ENCODE measurements at regions of chr1 and their contacts with region 1.

Region 1: GRCh38 chr1:169694304-169695075 is 16.9 kb downstream of the SELL start:
- DNase-seq: peak in 7 of 9 donors; percentile 63 to 85 (median 76)
- ATAC-seq: peak; percentile 71
- H3K4me3 ChIP-seq: peak overlapping the region; percentile 18
- H3K4me3 Mint-ChIP-seq: peak overlapping the region in 9 of 10 donors; percentile 21 to 86 (median 71)
- H3K27ac ChIP-seq: peak overlapping the region; percentile 70
- H3K27ac Mint-ChIP-seq: peak overlapping the region in 4 of 9 donors; percentile 86 to 98 (median 94)
- H3K4me1 ChIP-seq: peaks cover 91 to 92% of the 10 kb centered on the region in 2 donors
- H3K4me1 Mint-ChIP-seq: peaks cover 0 to 89% (median 74%) of the 10 kb centered on the region in 7 donors
- H3K27me3 ChIP-seq: no peaks in the 10 kb centered on the region
- H3K27me3 Mint-ChIP-seq: no peaks in the 10 kb centered on the region

Region 2: DNA sequence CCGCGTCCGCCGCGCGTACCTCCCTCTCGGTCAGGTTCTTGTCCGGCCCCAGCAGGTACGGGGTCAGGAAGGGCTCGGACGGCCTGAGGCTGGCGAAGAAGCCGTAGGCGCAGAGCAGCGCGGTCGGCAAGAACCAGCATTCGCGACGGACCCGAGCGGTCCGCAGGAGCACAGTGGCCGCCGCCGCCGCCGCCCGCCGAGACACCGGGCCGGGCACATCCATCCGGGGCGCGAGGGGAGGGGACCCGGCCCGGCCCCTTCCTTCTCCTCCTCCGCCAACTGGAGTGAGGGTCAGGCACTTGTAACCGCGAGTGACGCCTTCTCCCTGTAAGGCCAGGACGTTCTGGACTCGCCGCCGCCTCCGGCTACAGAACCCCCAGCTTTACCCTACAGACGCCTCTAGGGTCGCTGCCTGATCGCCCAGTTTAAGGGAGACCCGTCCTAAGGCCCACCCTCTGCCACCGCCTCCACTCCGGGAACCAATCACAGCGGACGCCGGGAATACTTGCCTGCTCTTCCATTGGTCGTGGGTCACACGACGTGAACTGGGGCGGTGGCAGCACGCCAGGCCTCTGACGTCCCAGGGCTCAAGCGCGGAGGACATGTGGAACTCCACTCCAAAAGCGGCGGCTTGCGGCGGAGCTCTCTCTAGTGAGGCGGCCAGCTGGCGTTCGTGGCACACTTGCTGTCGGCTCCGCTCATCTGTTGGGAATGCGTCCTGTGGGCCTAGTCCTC is 208.8 kb before region 1 on chr1 and contains the start of gene SLC19A2:
- CTCF ChIA-PET with region 1: interaction called, 3 read pairs
- POLR2A ChIA-PET with region 1: no interaction called
- intact Hi-C with region 1: loop called in 1 of 2 experiments (anchors 5 kb)
- DNase-seq: peak; percentile 79 to 94 (median 89)
- ATAC-seq: peak; percentile 99
- H3K4me3 ChIP-seq: peak within 1 kb of the TSS; percentile 66
- H3K4me3 Mint-ChIP-seq: peak within 1 kb of the TSS; percentile 87 to 98 (median 94)
- H3K27ac ChIP-seq: peak within 1 kb of the TSS; percentile 81
- H3K27ac Mint-ChIP-seq: peak within 1 kb of the TSS; percentile 86 to 98 (median 94)
- H3K4me1 ChIP-seq: peaks cover 4 to 12% of the 10 kb centered on the region in 2 donors
- H3K4me1 Mint-ChIP-seq: peaks cover 35 to 56% (median 46%) of the 10 kb centered on the region in 7 donors
- H3K27me3 ChIP-seq: no peaks in the 10 kb centered on the region
- H3K27me3 Mint-ChIP-seq: peaks cover 0 to 8% (median 0%) of the 10 kb centered on the region in 5 donors
- total RNA-seq, gene SLC19A2: 3.7 to 5.9 (median 4.8) TPM

Region 3: GRCh38 chr1:169610858-169611257 is 83.6 kb before region 1 on chr1:
- CTCF ChIA-PET with region 1: interaction called, 229 read pairs
- POLR2A ChIA-PET with region 1: interaction called, 159 read pairs
- intact Hi-C with region 1: no loop called
- DNase-seq: no peak
- ATAC-seq: no peak
- H3K4me3 ChIP-seq: no peak overlapping the region
- H3K4me3 Mint-ChIP-seq: no peak overlapping the region
- H3K27ac ChIP-seq: no peak overlapping the region
- H3K27ac Mint-ChIP-seq: peak overlapping the region in 1 of 9 donors; percentile 14
- H3K4me1 ChIP-seq: peaks cover under 1 to 12% of the 10 kb centered on the region in 2 donors
- H3K4me1 Mint-ChIP-seq: peaks cover 13 to 72% (median 45%) of the 10 kb centered on the region in 7 donors
- H3K27me3 ChIP-seq: no peaks in the 10 kb centered on the region
- H3K27me3 Mint-ChIP-seq: no peaks in the 10 kb centered on the region

Region 4: GRCh38 chr1:169653873-169654272 is 40.6 kb before region 1 on chr1:
- CTCF ChIA-PET with region 1: interaction called, 4 read pairs
- POLR2A ChIA-PET with region 1: interaction called, 10 read pairs
- intact Hi-C with region 1: loop called in 1 of 2 experiments (anchors 1 kb)
- DNase-seq: no peak
- ATAC-seq: no peak
- H3K4me3 ChIP-seq: no peak overlapping the region
- H3K4me3 Mint-ChIP-seq: no peak overlapping the region
- H3K27ac ChIP-seq: no peak overlapping the region
- H3K27ac Mint-ChIP-seq: peak overlapping the region in 2 of 9 donors; percentile 57 to 59
- H3K4me1 ChIP-seq: peaks cover 17 to 26% of the 10 kb centered on the region in 2 donors
- H3K4me1 Mint-ChIP-seq: peaks cover 36 to 69% (median 57%) of the 10 kb centered on the region in 7 donors
- H3K27me3 ChIP-seq: no peaks in the 10 kb centered on the region
- H3K27me3 Mint-ChIP-seq: no peaks in the 10 kb centered on the region

Region 5: DNA sequence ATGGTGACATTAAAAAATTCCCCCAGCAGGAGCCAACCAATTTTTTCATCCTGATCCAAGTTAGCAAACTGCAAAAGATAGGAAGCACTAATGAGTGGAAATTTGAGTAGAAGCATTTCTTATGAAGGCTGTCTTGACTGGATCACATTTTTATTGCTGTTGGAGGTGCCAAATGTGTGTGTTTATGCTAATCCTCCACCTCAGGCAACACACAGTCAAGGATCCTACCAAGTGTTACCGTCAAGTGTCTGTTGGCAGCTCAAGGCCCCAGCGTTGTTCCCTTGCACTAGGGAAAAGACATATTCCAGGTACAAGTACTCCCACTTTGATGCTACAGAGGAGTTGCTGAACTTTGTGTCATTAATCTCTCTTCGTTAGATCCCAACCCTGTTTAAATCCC is 82.0 kb after region 1 on chr1:
- CTCF ChIA-PET with region 1: no interaction called
- POLR2A ChIA-PET with region 1: no interaction called
- intact Hi-C with region 1: no loop called
- DNase-seq: no peak
- ATAC-seq: no peak
- H3K4me3 ChIP-seq: no peak overlapping the region
- H3K4me3 Mint-ChIP-seq: no peak overlapping the region
- H3K27ac ChIP-seq: no peak overlapping the region
- H3K27ac Mint-ChIP-seq: no peak overlapping the region
- H3K4me1 ChIP-seq: no peaks in the 10 kb centered on the region
- H3K4me1 Mint-ChIP-seq: no peaks in the 10 kb centered on the region
- H3K27me3 ChIP-seq: no peaks in the 10 kb centered on the region
- H3K27me3 Mint-ChIP-seq: peaks cover 0 to 7% (median 0%) of the 10 kb centered on the region in 5 donors

Region 6: GRCh38 chr1:169794530-169795416 is 100.3 kb after region 1 on chr1 and contains the start of gene METTL18:
- CTCF ChIA-PET with region 1: no interaction called
- POLR2A ChIA-PET with region 1: interaction called, 5 read pairs
- intact Hi-C with region 1: loop called (anchors 1 to 5 kb)
- DNase-seq: peak; percentile 72 to 96 (median 92)
- ATAC-seq: peak; percentile 100
- H3K4me3 ChIP-seq: peak within 1 kb of the TSS; percentile 98
- H3K4me3 Mint-ChIP-seq: peak within 1 kb of the TSS; percentile 90 to 100 (median 100)
- H3K27ac ChIP-seq: peak within 1 kb of the TSS; percentile 94
- H3K27ac Mint-ChIP-seq: peak within 1 kb of the TSS; percentile 97 to 100 (median 99)
- H3K4me1 ChIP-seq: peaks cover 10 to 28% of the 10 kb centered on the region in 2 donors
- H3K4me1 Mint-ChIP-seq: peaks cover 26 to 60% (median 56%) of the 10 kb centered on the region in 7 donors
- H3K27me3 ChIP-seq: no peaks in the 10 kb centered on the region
- H3K27me3 Mint-ChIP-seq: no peaks in the 10 kb centered on the region
- total RNA-seq, gene METTL18: 4.9 to 21.1 (median 13.4) TPM

Measured in naive thymus-derived CD4-positive, alpha-beta T cell (primary cell).